ENCODE measurements at regions of chr19 and their contacts with region 1.

Region 1: GRCh38 chr19:15418588-15419412 is at the start of gene AKAP8L:
- DNase-seq: peak; percentile 97 to 100 (median 99)
- H3K4me3 ChIP-seq: peak within 1 kb of the TSS; percentile 77
- H3K4me3 Mint-ChIP-seq: peak within 1 kb of the TSS; percentile 94 to 100 (median 98)
- H3K27ac ChIP-seq: peak within 1 kb of the TSS; percentile 81
- H3K27ac Mint-ChIP-seq: peak within 1 kb of the TSS; percentile 87 to 99 (median 98)
- H3K4me1 ChIP-seq: peaks cover 41% of the 10 kb centered on the region
- H3K4me1 Mint-ChIP-seq: peaks cover 36 to 51% (median 48%) of the 10 kb centered on the region in 3 donors
- H3K27me3 ChIP-seq: no peaks in the 10 kb centered on the region
- H3K27me3 Mint-ChIP-seq: peaks cover 0 to 3% of the 10 kb centered on the region in 2 donors
- total RNA-seq, gene AKAP8L: 74.5 to 74.9 TPM

Region 2: GRCh38 chr19:15177269-15178116 is 241.3 kb before region 1 on chr19:
- CTCF ChIA-PET with region 1: interaction called, 14 read pairs
- POLR2A ChIA-PET with region 1: interaction called, 6 read pairs
- DNase-seq: peak; percentile 75 to 85 (median 79)
- H3K4me3 ChIP-seq: no peak overlapping the region
- H3K4me3 Mint-ChIP-seq: peak overlapping the region in 4 of 7 donors; percentile 32 to 67 (median 48)
- H3K27ac ChIP-seq: no peak overlapping the region
- H3K27ac Mint-ChIP-seq: peak overlapping the region in 2 of 8 donors; percentile 10 to 77
- H3K4me1 ChIP-seq: peaks cover 4% of the 10 kb centered on the region
- H3K4me1 Mint-ChIP-seq: peaks cover 4 to 5% (median 5%) of the 10 kb centered on the region in 3 donors
- H3K27me3 ChIP-seq: no peaks in the 10 kb centered on the region
- H3K27me3 Mint-ChIP-seq: peaks cover 8 to 10% of the 10 kb centered on the region in 2 donors

Region 3: DNA sequence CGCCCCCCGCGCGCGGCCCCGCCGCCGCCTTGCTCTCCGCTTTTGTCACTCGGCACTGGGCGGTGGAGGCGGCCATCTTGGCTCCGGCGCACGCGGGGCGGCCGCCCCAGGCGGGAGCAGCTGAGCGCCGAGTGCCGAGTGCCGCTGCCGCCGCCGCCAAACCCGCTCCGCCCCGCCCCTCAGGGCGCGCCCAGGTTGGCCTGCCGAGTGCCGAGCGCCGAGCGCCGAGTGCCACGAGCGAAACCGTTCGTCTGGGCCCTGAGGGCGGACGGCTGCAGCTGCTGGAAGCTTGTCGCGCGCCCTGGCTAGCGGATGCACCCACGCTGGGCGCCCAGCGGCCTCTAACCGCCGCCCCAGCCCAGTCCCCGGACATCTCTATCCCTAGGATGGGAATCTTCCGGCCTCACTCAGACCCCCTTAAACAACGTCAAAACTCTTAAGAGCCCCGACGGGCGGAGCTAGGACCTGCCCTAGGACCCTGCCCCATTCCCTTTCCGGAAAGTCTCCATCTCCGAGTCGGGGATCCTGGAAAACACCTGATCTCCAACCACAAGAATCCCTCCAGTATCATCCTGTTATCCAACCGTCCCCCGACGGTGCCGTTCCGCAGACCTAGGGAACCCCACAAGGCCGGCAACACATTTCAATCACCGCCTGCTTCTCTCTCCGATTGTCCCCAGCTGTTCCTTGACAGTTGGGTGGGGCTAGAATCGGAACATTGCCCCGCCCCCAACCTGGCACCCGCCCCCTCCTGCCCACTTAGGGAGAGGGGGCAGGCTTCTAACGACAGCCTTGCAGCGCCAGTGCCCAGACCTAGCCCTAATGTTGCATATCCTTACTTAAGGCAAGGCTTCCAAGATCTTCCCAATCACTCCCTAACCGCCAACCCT is 14.1 kb after region 1 on chr19:
- CTCF ChIA-PET with region 1: interaction called, 24 read pairs
- POLR2A ChIA-PET with region 1: interaction called, 22 read pairs
- DNase-seq: peak; percentile 87 to 94 (median 88)
- H3K4me3 ChIP-seq: peak overlapping the region; percentile 86
- H3K4me3 Mint-ChIP-seq: peak overlapping the region; percentile 88 to 99 (median 95)
- H3K27ac ChIP-seq: peak overlapping the region; percentile 79
- H3K27ac Mint-ChIP-seq: peak overlapping the region; percentile 83 to 99 (median 95)
- H3K4me1 ChIP-seq: peaks cover 24% of the 10 kb centered on the region
- H3K4me1 Mint-ChIP-seq: peaks cover 27 to 31% (median 30%) of the 10 kb centered on the region in 3 donors
- H3K27me3 ChIP-seq: no peaks in the 10 kb centered on the region
- H3K27me3 Mint-ChIP-seq: no peaks in the 10 kb centered on the region

Region 4: GRCh38 chr19:15466851-15467733 is 48.3 kb after region 1 on chr19:
- CTCF ChIA-PET with region 1: interaction called, 16 read pairs
- POLR2A ChIA-PET with region 1: interaction called, 18 read pairs
- DNase-seq: peak; percentile 22 to 72 (median 38)
- H3K4me3 ChIP-seq: no peak overlapping the region
- H3K4me3 Mint-ChIP-seq: peak overlapping the region; percentile 58 to 89 (median 76)
- H3K27ac ChIP-seq: no peak overlapping the region
- H3K27ac Mint-ChIP-seq: peak overlapping the region; percentile 82 to 98 (median 90)
- H3K4me1 ChIP-seq: peaks cover 60% of the 10 kb centered on the region
- H3K4me1 Mint-ChIP-seq: peaks cover 52 to 72% (median 65%) of the 10 kb centered on the region in 3 donors
- H3K27me3 ChIP-seq: no peaks in the 10 kb centered on the region
- H3K27me3 Mint-ChIP-seq: peaks cover 0 to 3% of the 10 kb centered on the region in 2 donors

Region 5: GRCh38 chr19:15555759-15556633 is 137.2 kb after region 1 on chr19:
- CTCF ChIA-PET with region 1: interaction called, 183 read pairs
- POLR2A ChIA-PET with region 1: interaction called, 24 read pairs
- DNase-seq: peak; percentile 91 to 96 (median 94)
- H3K4me3 ChIP-seq: peak overlapping the region; percentile 52
- H3K4me3 Mint-ChIP-seq: peak overlapping the region; percentile 43 to 90 (median 87)
- H3K27ac ChIP-seq: peak overlapping the region; percentile 36
- H3K27ac Mint-ChIP-seq: peak overlapping the region; percentile 59 to 95 (median 94)
- H3K4me1 ChIP-seq: peaks cover 18% of the 10 kb centered on the region
- H3K4me1 Mint-ChIP-seq: peaks cover 16 to 25% (median 17%) of the 10 kb centered on the region in 3 donors
- H3K27me3 ChIP-seq: no peaks in the 10 kb centered on the region
- H3K27me3 Mint-ChIP-seq: no peaks in the 10 kb centered on the region

Measured in CD8-positive, alpha-beta memory T cell (primary cell).